ENCODE measurements at regions of chr2 and their contacts with region 1.

Region 1: DNA sequence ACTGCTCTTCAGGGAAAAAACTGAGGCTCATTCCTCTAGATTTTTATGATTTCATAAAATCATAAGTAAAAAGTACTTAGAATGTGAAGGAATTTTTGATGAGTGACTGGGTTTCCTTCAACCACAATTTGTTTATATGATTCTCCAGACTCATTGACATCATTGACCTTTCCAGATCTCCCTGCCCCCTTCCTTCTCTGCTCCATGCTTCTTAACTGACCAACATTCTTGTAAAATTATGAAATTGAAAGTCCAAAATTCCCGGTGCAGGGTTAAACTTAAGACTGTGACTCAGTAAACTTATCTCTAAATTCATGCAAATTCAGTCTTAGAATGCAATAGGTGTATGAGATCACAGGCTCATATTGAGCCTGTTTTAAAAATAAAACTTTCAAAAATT is 648.9 kb downstream of the TDRD15 start:
- DNase-seq: no peak

Region 2: DNA sequence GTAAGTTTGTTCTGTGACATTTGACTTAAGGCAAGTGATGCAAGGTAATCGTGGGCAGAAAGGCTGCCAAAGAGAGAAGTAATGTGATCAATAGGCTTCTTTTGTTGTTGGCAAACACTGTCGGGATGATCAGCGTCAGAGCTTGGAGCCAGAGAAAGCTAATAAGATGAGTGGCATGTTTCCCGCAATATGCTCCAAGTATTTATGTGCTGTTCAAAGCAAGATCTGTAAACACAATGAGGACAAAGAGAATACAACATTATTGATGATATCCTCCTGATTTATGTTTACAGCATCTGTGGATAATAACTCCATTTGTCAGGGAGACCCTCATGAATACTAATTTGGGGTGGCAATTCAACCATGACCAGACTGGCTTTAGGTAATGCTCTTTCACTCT is 45.5 kb before region 1 on chr2:
- intact Hi-C with region 1: no loop called
- DNase-seq: no peak

Region 3: DNA sequence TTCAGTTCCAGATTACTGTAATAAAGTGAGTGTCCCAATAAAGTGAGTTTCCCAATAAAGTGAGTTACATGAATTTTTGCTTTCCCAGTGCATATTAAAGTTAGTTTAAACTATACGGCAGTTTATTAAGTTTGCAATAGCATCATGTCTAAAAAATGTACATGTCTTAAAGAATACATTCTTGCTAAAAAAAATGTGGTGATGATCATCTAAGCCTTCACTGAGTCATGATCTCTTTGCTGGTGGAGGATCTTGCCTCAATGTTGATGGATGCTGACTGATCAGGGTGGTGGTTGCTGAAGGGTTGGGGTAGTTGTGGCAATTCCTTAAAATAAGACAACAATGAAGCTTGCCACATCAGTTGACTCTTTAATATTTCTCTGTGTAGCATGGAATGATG is 15.3 kb after region 1 on chr2:
- intact Hi-C with region 1: loop called in 1 of 2 experiments (anchors 2 kb)
- DNase-seq: no peak

Region 4: DNA sequence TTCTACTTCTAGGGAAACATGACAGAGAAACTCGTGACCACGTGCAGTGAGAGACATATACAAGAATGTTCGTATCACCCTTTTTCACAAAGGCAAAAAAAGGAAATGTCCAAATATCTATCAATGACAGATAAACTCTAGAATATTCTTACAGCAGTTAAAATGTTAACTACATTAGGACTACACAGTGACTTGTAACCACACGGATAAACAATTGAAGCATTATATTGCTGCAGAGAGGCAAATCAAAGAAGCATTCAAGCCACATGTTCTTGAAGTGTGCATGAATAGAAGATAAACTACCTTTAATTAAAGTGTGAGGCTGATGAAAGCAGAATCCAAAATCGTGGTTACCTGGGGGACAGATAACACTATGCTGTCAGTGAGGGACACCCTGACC is 677.1 kb after region 1 on chr2:
- intact Hi-C with region 1: no loop called
- DNase-seq: no peak

Measured in posterior vena cava (tissue), 2 donors.